IMR-90 (cell line): ENCODE measurements at regions of chr3 and their contacts with region 1.

Region 1: GRCh38 chr3:184889312-184889901 is 77.4 kb downstream of the VPS8 start:
- DNase-seq: no peak
- ATAC-seq: no peak
- H3K4me3 ChIP-seq: no peak overlapping the region
- H3K27ac ChIP-seq: no peak overlapping the region
- H3K4me1 ChIP-seq: no peaks in the 10 kb centered on the region
- H3K27me3 ChIP-seq: no peaks in the 10 kb centered on the region
- CTCF ChIP-seq: no peak
- POLR2A ChIP-seq: no peak
- RAD21 ChIP-seq: no peak

Region 2: DNA sequence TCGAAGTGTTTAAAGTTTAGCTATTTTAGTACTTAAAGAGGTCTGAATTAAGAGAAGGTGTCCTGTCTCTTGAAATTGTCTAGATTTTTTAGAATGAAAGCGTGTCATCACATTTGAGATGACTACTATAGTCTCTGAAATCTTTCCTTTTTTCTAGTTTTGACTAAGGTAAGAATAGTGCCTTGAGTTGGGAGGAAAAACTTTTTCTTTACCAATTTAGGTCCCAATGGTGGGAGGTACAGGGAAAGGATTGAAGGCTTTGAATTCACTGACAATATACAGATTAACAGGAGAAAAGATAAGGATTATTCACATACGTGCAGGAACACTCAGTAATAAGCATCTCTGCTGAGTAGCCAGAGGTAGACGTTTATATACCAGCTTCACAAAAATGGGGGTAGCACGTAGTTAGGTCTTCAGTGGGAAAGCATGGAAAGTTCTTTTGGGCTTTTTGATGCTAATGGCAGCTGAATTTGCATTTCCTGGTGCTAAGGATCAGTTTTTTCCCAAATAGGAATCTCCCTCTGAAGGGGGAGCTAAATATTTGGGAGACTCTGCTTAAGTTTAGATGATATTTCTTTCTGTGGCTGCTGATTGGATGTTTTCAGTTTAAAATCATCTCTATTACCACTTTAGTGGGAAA is 10.7 kb after region 1 on chr3:
- CTCF ChIA-PET with region 1: interaction called, 10 read pairs
- POLR2A ChIA-PET with region 1: no interaction called
- dilution Hi-C with region 1: no loop called
- in situ Hi-C with region 1: no loop called
- intact Hi-C with region 1: no loop called
- DNase-seq: no peak
- ATAC-seq: no peak
- H3K4me3 ChIP-seq: no peak overlapping the region
- H3K27ac ChIP-seq: no peak overlapping the region
- H3K4me1 ChIP-seq: no peaks in the 10 kb centered on the region
- H3K27me3 ChIP-seq: no peaks in the 10 kb centered on the region
- CTCF ChIP-seq: no peak
- POLR2A ChIP-seq: no peak
- RAD21 ChIP-seq: no peak